Prostate gland (tissue), 2 donors: ENCODE measurements at regions of chr1 and their contacts with region 1.

Region 1: GRCh38 chr1:214123061-214123784 is 135.4 kb downstream of the PROX1 start:
- DNase-seq: peak; percentile 56
- H3K4me3 ChIP-seq: no peak overlapping the region
- H3K27ac ChIP-seq: no peak overlapping the region
- H3K4me1 ChIP-seq: no peaks in the 10 kb centered on the region
- H3K27me3 ChIP-seq: no peaks in the 10 kb centered on the region
- CTCF ChIP-seq: peak in 3 of 4 experiments; percentile 40 to 66 (median 58)
- POLR2A ChIP-seq: no peak

Region 2: DNA sequence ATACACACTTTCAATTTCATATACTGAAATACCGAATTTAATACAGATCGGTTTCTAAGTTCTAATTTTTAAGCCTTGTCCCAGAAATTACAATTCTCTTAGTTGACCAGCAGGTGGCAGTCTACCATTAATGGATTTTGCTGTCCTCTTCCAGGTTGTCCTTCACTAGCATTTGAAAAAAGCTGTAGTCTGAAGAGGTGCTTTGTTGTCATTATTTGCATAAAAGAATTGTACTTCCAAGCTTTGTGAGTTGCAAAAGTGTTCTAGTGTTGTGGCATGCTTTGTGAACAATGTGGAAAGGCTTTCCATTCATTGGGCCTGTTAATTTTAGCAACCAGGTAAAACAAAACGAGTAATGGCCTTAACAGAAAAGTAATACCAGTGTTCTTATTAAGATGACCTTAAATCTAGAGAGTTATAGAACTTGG is 878.5 kb before region 1 on chr1:
- intact Hi-C with region 1: loop called (anchors 5 kb)
- DNase-seq: no peak
- H3K4me3 ChIP-seq: no peak overlapping the region
- H3K27ac ChIP-seq: no peak overlapping the region
- H3K4me1 ChIP-seq: no peaks in the 10 kb centered on the region
- H3K27me3 ChIP-seq: no peaks in the 10 kb centered on the region
- CTCF ChIP-seq: peak; percentile 64 to 84 (median 70)
- POLR2A ChIP-seq: no peak

Region 3: GRCh38 chr1:213374369-213374768 is 748.9 kb before region 1 on chr1:
- intact Hi-C with region 1: loop called (anchors 2 kb)
- DNase-seq: no peak
- H3K4me3 ChIP-seq: no peak overlapping the region
- H3K27ac ChIP-seq: no peak overlapping the region
- H3K4me1 ChIP-seq: no peaks in the 10 kb centered on the region
- H3K27me3 ChIP-seq: no peaks in the 10 kb centered on the region
- CTCF ChIP-seq: peak; percentile 41 to 74 (median 60)
- POLR2A ChIP-seq: no peak

Region 4: GRCh38 chr1:214192825-214193643 is 69.8 kb after region 1 on chr1:
- intact Hi-C with region 1: no loop called
- DNase-seq: no peak
- H3K4me3 ChIP-seq: no peak overlapping the region
- H3K27ac ChIP-seq: no peak overlapping the region
- H3K4me1 ChIP-seq: no peaks in the 10 kb centered on the region
- H3K27me3 ChIP-seq: peaks cover 3% of the 10 kb centered on the region
- CTCF ChIP-seq: no peak
- POLR2A ChIP-seq: no peak